Activated naive CD4-positive, alpha-beta T cell treated with anti-CD3 and anti-CD28 coated beads for 36 hours (primary cell): ENCODE measurements at regions of chr12 and their contacts with region 1.

Region 1: DNA sequence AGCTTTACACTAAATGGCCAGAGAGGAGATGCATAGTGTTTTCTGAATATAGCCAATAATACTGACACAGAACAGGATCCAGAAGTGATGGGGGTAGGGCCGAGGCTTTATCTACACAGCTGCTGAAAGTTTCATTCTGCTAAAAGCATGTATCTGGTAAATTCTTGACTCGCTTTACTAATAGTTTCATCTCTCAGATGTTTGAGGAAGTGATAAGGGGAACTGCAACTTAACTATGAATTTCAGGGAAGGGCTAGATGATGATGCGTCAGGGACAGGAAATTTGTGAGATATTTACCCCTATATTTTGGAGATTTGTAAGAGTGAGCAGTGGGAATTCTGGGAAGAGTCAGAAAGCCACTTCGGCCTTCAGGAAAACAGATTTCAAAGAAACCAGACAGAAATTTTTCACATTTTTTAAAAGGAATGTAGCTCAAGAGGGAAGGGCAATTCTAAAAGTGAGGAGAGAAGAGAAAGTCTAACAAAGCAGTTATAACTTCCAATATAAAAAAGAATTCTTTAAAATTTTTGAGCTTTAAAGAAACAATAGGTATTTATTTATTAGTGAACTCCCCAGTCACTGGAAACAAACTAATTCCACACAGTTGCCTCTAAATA is 243.1 kb downstream of the BCAT1 start:
- DNase-seq: peak; percentile 41
- H3K4me3 Mint-ChIP-seq: no peak overlapping the region
- H3K27ac Mint-ChIP-seq: peak overlapping the region; percentile 75
- H3K4me1 Mint-ChIP-seq: peaks cover 17% of the 10 kb centered on the region
- H3K27me3 Mint-ChIP-seq: peaks cover 2% of the 10 kb centered on the region

Region 2: DNA sequence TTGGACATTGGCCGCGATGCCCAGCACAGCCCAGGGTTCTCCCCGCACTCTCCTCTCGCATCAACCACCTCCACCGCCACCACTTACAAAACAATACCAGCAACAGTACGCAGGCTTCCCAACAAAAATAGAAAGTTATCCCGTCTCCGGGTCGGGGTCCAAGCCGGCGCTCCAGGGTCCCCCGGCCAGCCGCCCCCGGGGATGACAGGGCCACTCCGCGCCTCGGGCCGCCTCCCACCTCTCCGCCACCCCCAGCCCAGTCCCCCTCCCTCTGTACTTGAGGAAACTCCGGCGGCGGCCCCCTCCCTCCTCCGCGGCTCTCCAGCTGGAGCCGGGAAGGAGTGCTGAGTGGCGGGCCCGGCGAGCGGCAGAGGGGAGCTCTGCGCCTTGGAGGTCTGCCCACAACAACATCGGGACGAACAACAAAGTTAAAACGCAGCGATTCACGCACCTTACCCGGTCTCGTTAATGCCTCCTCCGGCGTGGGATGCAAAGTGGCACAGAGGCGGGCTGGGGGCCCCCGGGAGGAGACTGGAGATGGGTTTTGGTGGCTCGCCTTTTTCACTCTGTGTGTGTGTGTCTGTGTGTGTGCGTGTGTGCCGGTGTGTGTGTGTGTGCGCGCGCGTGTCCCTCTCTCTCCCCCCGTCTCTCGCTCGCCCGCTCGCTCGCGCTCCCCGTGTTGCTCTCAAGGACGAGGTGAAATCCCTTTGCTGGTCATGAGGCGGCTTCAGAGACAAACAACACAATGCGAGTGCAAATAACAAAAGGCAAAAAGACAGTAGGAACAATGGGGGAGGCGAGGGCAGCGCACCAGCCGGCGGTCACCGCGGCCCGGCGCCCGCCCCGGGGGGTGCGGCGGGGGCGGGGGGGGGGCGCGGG is 143.7 kb before region 1 on chr12:
- CTCF ChIA-PET with region 1: no interaction called
- intact Hi-C with region 1: loop called (anchors 5 kb)
- DNase-seq: peak; percentile 24
- H3K4me3 Mint-ChIP-seq: peak overlapping the region; percentile 78
- H3K27ac Mint-ChIP-seq: peak overlapping the region; percentile 46
- H3K4me1 Mint-ChIP-seq: peaks cover 13% of the 10 kb centered on the region
- H3K27me3 Mint-ChIP-seq: peaks cover 64% of the 10 kb centered on the region

Region 3: DNA sequence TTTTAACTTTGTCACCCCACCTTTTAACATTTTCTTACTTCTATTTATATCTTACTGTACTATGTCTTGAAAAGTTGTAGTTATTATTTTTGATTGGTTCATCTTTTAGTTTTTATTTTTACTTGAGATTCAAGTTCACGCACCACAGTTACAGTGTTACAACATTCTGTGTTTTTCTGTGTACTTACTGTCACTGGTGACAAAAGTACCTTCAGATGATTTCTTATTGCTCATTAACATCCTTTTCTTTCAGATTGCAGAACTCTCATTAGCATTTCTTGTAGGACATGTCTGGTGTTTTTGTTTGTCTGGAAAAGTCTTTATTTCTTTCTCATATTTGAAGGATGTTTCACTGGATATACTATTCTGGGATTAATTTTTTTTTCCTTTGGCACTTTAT is 46.8 kb before region 1 on chr12:
- CTCF ChIA-PET with region 1: no interaction called
- intact Hi-C with region 1: loop called (anchors 5 kb)
- DNase-seq: no peak
- H3K4me3 Mint-ChIP-seq: no peak overlapping the region
- H3K27ac Mint-ChIP-seq: no peak overlapping the region
- H3K4me1 Mint-ChIP-seq: no peaks in the 10 kb centered on the region
- H3K27me3 Mint-ChIP-seq: peaks cover 4% of the 10 kb centered on the region

Region 4: DNA sequence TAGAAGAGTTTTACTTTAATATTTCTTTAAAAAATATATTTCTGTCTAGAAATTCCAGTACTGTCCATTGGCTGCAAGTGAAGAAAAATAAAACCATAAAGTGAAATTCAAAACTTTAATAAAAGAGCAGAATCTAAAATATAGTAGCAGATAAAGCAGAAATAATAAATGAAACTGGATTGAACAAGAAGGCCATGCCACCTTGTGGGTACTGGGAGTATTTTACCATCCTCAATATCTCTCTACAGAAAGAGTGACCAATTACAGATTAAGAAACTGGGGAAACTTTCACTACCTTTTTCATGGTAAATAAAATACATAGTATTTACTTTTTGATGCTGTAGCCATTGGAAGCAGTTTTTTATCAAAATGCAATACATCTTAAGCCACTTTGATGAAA is 22.5 kb after region 1 on chr12:
- CTCF ChIA-PET with region 1: no interaction called
- intact Hi-C with region 1: loop called (anchors 2 kb)
- DNase-seq: no peak
- H3K4me3 Mint-ChIP-seq: no peak overlapping the region
- H3K27ac Mint-ChIP-seq: no peak overlapping the region
- H3K4me1 Mint-ChIP-seq: peaks cover 31% of the 10 kb centered on the region
- H3K27me3 Mint-ChIP-seq: peaks cover 4% of the 10 kb centered on the region

Region 5: DNA sequence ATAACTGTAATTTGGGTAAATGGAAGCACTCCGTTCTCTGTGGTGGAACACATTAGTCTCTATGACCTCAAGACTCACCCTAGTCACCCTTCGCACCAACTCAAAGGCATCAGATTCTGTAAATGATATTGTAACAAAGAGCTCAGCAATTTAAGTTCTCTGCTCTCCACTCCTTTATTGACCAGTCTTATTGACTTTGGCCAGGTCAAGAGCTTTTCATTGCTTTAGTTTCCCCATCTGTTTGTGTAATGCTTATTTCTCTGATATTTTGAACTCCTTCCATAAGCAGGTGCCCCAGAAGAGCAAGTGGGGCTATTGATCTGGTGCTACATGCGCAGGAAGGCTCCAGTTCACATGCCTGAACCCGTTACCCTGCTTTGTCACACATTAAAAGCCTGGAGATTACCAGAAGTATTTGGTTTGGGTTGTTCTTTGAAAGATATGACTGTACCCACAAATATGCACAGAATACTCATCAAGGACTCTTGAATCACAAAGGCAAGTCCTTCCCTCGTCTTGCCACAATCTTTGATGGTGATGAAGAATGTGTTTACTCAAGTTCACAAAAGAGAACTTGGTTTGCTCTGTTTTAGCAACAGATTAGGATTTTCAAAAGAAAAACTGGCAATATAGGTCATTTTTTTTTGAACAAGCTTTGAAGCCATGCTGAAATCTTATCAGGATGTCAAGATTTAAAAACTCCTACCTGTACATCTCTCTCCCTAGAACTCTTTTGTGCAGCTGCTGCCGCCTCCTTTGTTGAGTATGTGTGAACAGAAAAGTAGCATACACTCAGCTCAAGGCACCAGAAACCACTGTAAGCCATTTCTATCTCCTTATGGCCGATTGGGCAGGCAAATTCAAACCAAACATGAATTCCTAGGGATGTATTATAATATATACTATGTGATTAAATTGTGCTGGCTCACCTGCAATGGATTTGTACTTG is 49.1 kb after region 1 on chr12:
- CTCF ChIA-PET with region 1: no interaction called
- intact Hi-C with region 1: loop called (anchors 1 kb)
- DNase-seq: peak; percentile 25
- H3K4me3 Mint-ChIP-seq: no peak overlapping the region
- H3K27ac Mint-ChIP-seq: peak overlapping the region; percentile 74
- H3K4me1 Mint-ChIP-seq: peaks cover 12% of the 10 kb centered on the region
- H3K27me3 Mint-ChIP-seq: peaks cover 19% of the 10 kb centered on the region

Region 6: DNA sequence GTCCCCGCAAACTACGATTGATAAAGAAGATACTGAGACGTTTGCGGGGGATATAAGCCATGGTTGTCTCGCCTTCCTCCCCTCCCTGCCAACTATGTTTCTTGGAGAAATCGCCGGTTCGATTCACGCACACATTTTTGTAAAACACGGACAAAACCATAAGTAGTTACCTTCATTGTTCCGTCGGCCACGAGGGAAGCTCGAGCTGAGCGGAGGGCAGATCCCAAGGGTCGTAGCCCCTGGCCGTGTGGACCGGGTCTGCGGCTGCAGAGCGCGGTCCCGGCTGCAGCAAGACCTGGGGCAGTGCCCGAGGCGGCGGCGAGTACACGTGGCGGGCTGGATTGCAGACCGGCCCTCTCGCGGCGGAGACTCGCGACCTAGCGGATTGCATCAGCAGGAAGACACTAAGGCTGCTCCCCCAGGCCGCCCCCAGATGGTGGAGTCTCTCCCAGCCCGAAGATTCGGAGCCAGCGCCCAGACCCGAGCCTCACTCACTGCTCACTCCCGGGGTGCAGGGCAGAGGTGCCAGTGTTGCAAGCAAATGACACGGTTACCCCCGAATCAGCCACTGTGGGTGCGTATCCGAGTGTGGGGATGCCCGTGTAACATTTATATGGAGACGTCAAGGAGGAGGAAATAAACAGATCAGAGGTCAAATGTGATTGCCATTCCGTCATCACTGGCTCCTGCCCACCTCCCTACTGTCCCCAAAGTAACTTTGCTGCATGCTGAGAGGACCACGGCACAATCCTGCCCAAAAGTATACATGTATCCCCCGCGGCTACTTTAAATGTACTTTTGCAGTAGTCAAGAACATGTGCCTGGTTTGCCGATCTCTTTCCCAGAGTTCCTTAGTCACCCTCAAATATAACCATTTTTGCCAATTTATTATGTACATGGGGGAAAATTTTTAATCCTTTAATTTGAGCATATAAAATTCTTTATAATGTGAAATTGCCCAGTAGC is 243.2 kb after region 1 on chr12 and contains the start of gene BCAT1:
- CTCF ChIA-PET with region 1: no interaction called
- intact Hi-C with region 1: loop called (anchors 2 kb)
- DNase-seq: peak; percentile 35
- H3K4me3 Mint-ChIP-seq: peak within 1 kb of the TSS; percentile 81
- H3K27ac Mint-ChIP-seq: peak within 1 kb of the TSS; percentile 81
- H3K4me1 Mint-ChIP-seq: peaks cover 59% of the 10 kb centered on the region
- H3K27me3 Mint-ChIP-seq: peaks cover 62% of the 10 kb centered on the region
- total RNA-seq, gene BCAT1: 16.4 to 16.7 TPM